ENCODE measurements at regions of chr18 and their contacts with region 1.

Region 1: GRCh38 chr18:59056706-59057492 is 82.8 kb upstream of the SEC11C start:
- DNase-seq: peak; percentile 85 to 89
- H3K4me3 ChIP-seq: no peak overlapping the region
- H3K27ac ChIP-seq: no peak overlapping the region
- H3K4me1 ChIP-seq: peaks cover 0 to 21% (median 7%) of the 10 kb centered on the region in 4 donors
- H3K27me3 ChIP-seq: no peaks in the 10 kb centered on the region
- CTCF ChIP-seq: peak in 5 of 7 experiments; percentile 67 to 92 (median 82)
- EP300 ChIP-seq: no peak
- POLR2A ChIP-seq: no peak

Region 2: DNA sequence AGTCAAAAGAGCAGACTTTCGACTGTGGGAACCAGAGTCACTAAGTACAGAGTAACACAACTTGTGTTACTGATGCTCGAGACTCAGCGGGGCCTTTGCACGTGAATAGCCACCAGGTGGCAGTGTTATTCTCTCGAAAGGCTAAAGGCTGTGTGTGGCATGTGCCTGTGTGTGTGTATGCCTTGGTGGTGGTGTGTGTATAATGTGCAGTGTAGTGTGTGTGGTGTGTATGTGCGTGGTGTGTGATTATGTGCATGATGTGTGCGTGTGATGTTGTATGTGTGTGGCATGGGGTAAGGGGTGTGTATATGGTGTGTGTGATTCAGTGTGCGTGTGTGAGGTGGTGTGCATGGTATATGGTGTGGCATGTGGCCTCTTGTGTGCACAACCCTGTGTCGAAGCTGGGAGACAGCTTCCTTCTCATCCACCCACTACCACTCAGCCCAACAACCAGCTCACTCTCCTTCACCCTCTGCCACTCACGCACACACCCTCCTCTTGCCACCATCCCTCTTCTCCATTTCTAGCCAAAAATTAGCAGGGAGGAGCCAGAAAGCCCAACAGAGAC is 275.2 kb before region 1 on chr18:
- intact Hi-C with region 1: loop called (anchors 5 kb)
- DNase-seq: peak; percentile 77 to 92
- H3K4me3 ChIP-seq: no peak overlapping the region
- H3K27ac ChIP-seq: no peak overlapping the region
- H3K4me1 ChIP-seq: peaks cover 14 to 22% (median 19%) of the 10 kb centered on the region in 4 donors
- H3K27me3 ChIP-seq: no peaks in the 10 kb centered on the region
- CTCF ChIP-seq: peak in 6 of 7 experiments; percentile 67 to 98 (median 86)
- EP300 ChIP-seq: no peak
- POLR2A ChIP-seq: no peak

Region 3: DNA sequence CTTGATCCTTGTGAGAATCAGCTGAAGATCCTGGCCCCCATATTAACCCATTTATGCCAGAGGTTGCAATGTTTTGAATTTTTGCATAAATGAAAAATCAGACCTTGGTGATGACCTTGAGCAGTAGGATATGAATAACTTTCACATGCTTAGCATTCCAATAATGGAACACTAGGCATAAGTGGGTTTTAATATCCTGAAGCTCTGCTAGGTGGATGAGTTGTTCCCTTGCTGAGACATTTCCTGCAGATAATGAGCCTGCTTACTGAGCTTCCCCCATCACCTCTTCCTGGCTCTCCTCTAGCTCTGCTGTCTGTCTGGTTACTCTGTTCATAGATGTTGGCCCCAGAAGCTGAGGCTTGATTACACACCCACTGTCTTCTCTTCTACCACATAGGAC is 57.3 kb after region 1 on chr18:
- intact Hi-C with region 1: no loop called
- DNase-seq: no peak
- H3K4me3 ChIP-seq: no peak overlapping the region
- H3K27ac ChIP-seq: no peak overlapping the region
- H3K4me1 ChIP-seq: no peaks in the 10 kb centered on the region
- H3K27me3 ChIP-seq: peaks cover 0 to 40% (median 0%) of the 10 kb centered on the region in 3 donors
- CTCF ChIP-seq: no peak
- EP300 ChIP-seq: no peak
- POLR2A ChIP-seq: no peak